Tibial artery (tissue), 4 donors: ENCODE measurements at regions of chr1 and their contacts with region 1.

Region 1: GRCh38 chr1:169495046-169495775 is 9.5 kb upstream of the SLC19A2 start:
- DNase-seq: no peak
- H3K4me3 ChIP-seq: no peak overlapping the region
- H3K27ac ChIP-seq: no peak overlapping the region
- H3K4me1 ChIP-seq: no peaks in the 10 kb centered on the region
- H3K27me3 ChIP-seq: no peaks in the 10 kb centered on the region
- CTCF ChIP-seq: no peak

Region 2: DNA sequence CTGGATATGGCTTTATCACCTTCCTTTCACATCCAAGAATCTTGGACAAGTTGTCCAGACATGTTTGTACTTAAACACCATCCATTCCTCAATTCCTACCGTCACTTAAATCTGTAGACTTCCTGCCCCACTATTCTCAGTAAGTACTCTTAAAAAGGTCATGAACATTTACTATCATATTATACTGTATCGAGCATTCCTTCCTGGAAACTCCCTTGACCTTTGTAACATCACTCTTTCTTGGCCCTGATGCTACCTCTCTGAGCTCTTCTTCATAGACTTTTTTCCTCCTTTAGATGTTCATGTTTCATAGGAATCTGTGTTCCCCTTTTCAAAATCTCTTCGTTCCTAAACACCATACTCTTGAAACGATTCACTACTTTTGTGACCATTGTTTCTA is 111.8 kb before region 1 on chr1:
- intact Hi-C with region 1: loop called (anchors 5 kb)
- DNase-seq: no peak
- H3K4me3 ChIP-seq: no peak overlapping the region
- H3K27ac ChIP-seq: no peak overlapping the region
- H3K4me1 ChIP-seq: no peaks in the 10 kb centered on the region
- H3K27me3 ChIP-seq: no peaks in the 10 kb centered on the region
- CTCF ChIP-seq: no peak

Region 3: DNA sequence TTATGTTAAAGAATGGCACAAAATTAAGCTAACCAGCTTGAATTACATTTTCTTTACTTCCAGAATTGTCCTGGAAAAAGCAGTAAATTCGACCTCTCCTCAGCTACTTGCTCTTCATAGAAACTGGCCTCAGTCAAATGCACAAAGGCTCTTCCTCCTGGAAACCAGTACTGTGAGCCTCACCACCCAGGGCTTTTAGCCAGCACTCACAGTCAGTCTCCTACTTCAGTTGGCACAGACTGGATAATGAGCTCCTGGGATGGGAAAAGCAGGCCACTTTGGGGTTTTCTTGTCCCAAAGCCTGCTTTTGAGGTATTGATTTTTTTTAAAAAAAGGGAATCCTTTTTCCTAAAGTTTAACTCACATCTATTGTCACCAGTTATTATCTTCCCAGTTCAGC is 358.1 kb after region 1 on chr1:
- intact Hi-C with region 1: no loop called
- DNase-seq: no peak
- H3K4me3 ChIP-seq: no peak overlapping the region
- H3K27ac ChIP-seq: no peak overlapping the region
- H3K4me1 ChIP-seq: no peaks in the 10 kb centered on the region
- H3K27me3 ChIP-seq: no peaks in the 10 kb centered on the region
- CTCF ChIP-seq: no peak

Region 4: DNA sequence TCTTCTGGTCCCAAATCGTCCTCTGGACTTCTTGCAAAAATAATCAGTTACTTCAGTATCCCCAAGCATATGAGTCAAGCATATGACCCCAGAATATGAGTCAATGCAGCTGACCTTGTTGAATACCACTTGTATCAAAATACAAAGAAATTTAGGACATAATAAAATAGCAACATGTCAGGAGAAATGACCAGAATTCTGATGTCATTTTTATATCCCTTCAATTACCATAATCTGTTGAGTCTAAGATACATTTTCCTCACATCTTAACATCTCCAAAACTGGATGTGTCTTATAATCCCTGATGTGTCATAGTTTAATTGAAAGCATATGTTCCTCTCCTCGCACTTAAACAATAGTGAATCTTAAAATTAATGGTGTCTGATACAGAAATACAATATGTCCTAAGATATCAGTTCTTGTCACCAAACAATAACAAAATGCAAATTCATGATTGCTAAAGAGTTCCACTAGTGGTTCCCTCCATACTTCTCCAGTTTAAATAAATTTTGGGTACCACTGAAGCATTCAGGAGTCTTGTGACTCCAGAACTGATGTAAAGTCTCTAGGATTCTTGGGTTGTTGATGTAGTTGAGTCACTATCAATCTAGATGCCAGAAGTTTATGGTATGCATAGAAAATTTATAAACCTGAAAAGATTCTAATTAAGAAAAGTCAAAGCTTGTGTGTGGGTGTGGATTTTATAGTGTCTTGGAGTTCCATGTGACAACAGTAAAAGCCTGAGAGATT is 537.5 kb after region 1 on chr1:
- intact Hi-C with region 1: no loop called
- DNase-seq: no peak
- H3K4me3 ChIP-seq: no peak overlapping the region
- H3K27ac ChIP-seq: no peak overlapping the region
- H3K4me1 ChIP-seq: no peaks in the 10 kb centered on the region
- H3K27me3 ChIP-seq: no peaks in the 10 kb centered on the region
- CTCF ChIP-seq: no peak